Activated T-helper 1 cell treated with anti-CD3 and anti-CD28 coated beads, Interleukin-12 subunit alpha, Interleukin-12 subunit beta, Interleukin-2, Interleukin-4 antibody, amounts not matched to agents 30 ng/mL and 10 ng/mL and 1 ng/mL, durations not matched to agents 14 hours and 24 hours and 36 hours (primary cell): ENCODE measurements at regions of chr9 and their contacts with region 1.

Region 1: DNA sequence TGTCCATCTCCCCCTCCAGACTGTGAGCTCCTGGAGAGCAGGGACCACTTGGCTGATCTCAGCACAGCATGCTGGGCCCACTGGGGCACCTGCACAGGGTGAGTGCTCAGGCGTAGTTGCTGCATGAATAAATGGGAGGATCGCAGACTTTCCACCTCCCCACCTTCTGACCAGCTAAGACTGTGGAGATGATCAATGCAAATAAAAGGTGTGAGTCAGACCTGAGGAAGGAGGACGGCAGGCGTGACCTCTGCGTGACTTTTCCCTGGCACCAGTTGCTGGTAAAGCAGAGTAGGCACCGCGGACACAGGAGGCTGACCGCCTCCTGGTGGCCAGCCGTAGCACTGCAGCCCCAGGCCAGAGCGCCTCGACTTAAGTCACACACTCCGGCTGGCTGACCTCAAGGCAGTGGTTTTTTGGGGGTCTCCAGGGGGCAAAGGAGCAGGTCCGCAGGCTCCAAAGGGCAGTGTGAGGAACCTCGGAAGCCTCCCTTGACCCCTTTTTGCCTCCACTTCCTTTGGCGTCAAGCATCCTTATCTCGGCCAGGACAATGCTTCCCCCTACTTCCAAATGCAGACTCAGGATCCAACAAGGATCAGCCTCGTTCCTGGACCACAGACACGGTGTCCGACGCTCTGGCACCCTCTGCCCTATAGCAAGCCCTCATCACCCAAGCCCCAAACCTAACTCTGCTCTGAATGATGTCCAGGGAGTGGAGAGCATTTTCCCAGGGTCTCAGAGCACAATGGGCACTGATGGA is 12.7 kb upstream of the TDRD7 start:
- DNase-seq: peak; percentile 52
- H3K4me3 Mint-ChIP-seq: no peak overlapping the region
- H3K27ac Mint-ChIP-seq: peak overlapping the region; percentile 53
- H3K4me1 Mint-ChIP-seq: peaks cover 29% of the 10 kb centered on the region
- H3K27me3 Mint-ChIP-seq: peaks cover 42% of the 10 kb centered on the region

Region 2: GRCh38 chr9:95927271-95928004 is 1471.7 kb before region 1 on chr9:
- intact Hi-C with region 1: loop called (anchors 5 kb)
- DNase-seq: no peak
- H3K4me3 Mint-ChIP-seq: no peak overlapping the region
- H3K27ac Mint-ChIP-seq: peak overlapping the region; percentile 6
- H3K4me1 Mint-ChIP-seq: peaks cover 11% of the 10 kb centered on the region
- H3K27me3 Mint-ChIP-seq: no peaks in the 10 kb centered on the region

Region 3: DNA sequence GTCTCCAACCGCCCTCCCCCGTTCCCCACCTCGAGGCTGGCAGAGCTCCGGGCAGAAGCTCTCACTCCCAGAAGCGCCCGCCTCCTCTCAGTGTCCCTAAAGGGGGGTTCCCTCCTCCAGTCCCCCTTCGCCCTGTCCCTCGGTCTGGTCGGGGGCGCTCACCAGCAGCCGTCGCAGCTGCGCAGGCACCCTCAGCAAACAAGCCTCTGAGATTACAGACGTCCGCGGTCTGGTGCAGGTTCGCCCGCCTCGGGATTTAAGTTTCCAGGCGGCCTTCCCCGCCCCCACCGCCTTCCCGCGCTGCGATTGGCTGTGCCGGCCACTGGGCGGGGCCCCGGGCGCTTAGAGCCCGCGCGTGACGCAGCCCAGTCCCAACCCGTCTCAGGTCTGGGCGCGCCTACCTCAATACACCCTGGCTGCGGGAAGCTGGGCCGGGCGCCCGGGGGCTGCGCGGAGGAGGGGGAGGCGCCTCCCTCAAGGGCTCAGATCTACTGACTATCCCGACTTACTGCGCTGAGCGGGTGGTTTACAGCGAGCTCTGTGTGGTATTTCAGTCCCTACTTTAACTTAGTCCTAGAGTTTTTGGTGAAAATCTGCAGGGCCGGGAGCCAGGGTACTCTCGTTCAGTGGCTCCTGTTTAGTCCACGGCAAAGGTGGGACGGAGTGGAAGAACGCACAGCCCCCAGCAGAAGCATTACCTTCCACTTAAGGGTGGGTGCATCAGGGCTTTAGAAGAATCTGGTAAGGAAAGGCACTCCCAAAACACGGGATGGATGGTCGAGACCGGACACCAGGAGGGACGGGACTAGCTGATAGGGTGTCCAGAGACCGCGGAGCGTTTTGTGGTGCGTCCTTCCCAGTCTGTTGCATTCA is 360.0 kb before region 1 on chr9 and contains the start of gene CTSV:
- intact Hi-C with region 1: loop called (anchors 1 kb)
- DNase-seq: peak; percentile 79
- H3K4me3 Mint-ChIP-seq: peak within 1 kb of the TSS; percentile 85
- H3K27ac Mint-ChIP-seq: no peak within 1 kb of the TSS
- H3K4me1 Mint-ChIP-seq: peaks cover 5% of the 10 kb centered on the region
- H3K27me3 Mint-ChIP-seq: peaks cover 45% of the 10 kb centered on the region
- total RNA-seq, gene CTSV: 0.24 and 0.31 TPM in 2 replicates

Region 4: GRCh38 chr9:97386733-97387503 is 12.3 kb before region 1 on chr9:
- intact Hi-C with region 1: loop called (anchors 1 kb)
- DNase-seq: peak; percentile 63
- H3K4me3 Mint-ChIP-seq: no peak overlapping the region
- H3K27ac Mint-ChIP-seq: no peak overlapping the region
- H3K4me1 Mint-ChIP-seq: peaks cover 41% of the 10 kb centered on the region
- H3K27me3 Mint-ChIP-seq: peaks cover 33% of the 10 kb centered on the region

Region 5: GRCh38 chr9:97501177-97501971 is 102.2 kb after region 1 on chr9 and contains the start of gene TMOD1:
- intact Hi-C with region 1: loop called (anchors 5 kb)
- DNase-seq: peak; percentile 28
- H3K4me3 Mint-ChIP-seq: peak within 1 kb of the TSS; percentile 78
- H3K27ac Mint-ChIP-seq: peak within 1 kb of the TSS; percentile 31
- H3K4me1 Mint-ChIP-seq: peaks cover 25% of the 10 kb centered on the region
- H3K27me3 Mint-ChIP-seq: peaks cover 52% of the 10 kb centered on the region
- total RNA-seq, gene TMOD1: 0.81 and 0.86 TPM in 2 replicates